ENCODE measurements at regions of chr2 and their contacts with region 1.

Region 1: GRCh38 chr2:228329282-228329681 is 147.8 kb upstream of the SPHKAP start:
- DNase-seq: no peak
- ATAC-seq: peak; percentile 88

Region 2: GRCh38 chr2:228318218-228318617 is 11.1 kb before region 1 on chr2:
- intact Hi-C with region 1: no loop called
- DNase-seq: no peak
- ATAC-seq: peak; percentile 69

Region 3: DNA sequence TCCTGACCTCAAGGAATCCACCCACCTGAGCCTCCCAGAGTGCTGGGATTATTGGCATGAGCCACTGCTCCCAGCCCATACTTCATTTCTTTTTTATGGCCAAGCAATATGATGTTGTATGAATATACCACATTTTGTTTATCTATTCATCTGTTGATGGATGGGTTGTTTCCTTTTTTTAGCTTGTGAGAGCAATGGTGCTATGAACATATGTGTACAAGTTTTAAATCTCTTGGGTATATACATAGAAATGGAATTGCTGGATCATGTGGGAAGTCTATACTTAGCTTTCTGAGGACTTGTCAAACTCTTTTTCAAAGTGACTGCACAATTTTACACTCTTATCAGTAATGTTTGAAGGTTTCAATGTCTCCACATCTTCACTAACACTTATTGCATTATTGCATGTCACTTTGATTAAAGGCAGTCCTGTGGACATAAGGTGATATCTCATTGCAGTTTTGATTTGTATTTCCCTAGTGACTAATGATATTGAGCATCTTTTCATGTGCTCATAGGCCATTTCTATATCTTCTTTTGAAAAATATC is 19.3 kb after region 1 on chr2:
- intact Hi-C with region 1: loop called (anchors 2 kb)
- DNase-seq: no peak
- ATAC-seq: peak; percentile 87